ENCODE measurements at regions of chr12 and their contacts with region 1.

Region 1: DNA sequence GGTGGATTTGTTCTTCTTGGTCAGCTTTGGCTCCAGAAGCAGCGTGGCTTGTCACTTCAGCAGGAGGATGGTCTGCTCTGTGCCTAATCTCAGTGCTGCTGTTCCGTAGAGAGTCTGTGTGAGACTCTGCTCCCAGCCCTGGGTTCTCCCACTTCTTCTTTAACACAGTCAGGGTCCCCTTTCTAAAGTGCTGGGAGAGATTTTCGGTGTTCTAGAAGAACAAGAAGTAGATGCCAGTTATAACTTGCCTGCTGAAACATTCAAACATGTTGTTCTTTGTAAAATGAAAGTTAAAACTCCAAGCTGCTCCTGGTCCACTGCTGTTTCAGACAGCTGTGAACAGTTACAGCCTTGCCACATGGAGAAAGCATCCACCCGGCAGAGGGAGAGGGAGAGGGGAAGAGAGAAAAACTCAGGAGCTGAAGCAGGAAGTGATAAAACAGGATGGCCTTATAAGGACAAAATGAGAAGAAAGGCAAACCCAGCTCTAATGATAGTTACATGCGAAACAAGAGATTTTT is 55.2 kb upstream of the CERS5 start:
- DNase-seq: peak; percentile 57
- H3K4me3 ChIP-seq: peak overlapping the region; percentile 18 to 24
- H3K27ac ChIP-seq: peak overlapping the region; percentile 74 to 75
- H3K4me1 ChIP-seq: peaks cover 12% of the 10 kb centered on the region
- H3K27me3 ChIP-seq: no peaks in the 10 kb centered on the region
- CTCF ChIP-seq: peak in 3 of 4 experiments; percentile 4 to 45 (median 38)
- POLR2A ChIP-seq: peak; percentile 20

Region 2: GRCh38 chr12:50257686-50258551 is 35.6 kb after region 1 on chr12:
- intact Hi-C with region 1: loop called (anchors 5 kb)
- DNase-seq: peak; percentile 81
- H3K4me3 ChIP-seq: no peak overlapping the region
- H3K27ac ChIP-seq: peak overlapping the region; percentile 69 to 70
- H3K4me1 ChIP-seq: peaks cover 15% of the 10 kb centered on the region
- H3K27me3 ChIP-seq: no peaks in the 10 kb centered on the region
- CTCF ChIP-seq: no peak
- POLR2A ChIP-seq: no peak

Region 3: GRCh38 chr12:50314629-50315312 is 92.4 kb after region 1 on chr12:
- intact Hi-C with region 1: loop called (anchors 10 kb)
- DNase-seq: no peak
- H3K4me3 ChIP-seq: no peak overlapping the region
- H3K27ac ChIP-seq: no peak overlapping the region
- H3K4me1 ChIP-seq: no peaks in the 10 kb centered on the region
- H3K27me3 ChIP-seq: no peaks in the 10 kb centered on the region
- CTCF ChIP-seq: peak; percentile 9 to 77 (median 62)
- POLR2A ChIP-seq: no peak

Region 4: GRCh38 chr12:50400598-50401364 is 178.4 kb after region 1 on chr12 and contains the start of gene LARP4:
- intact Hi-C with region 1: loop called (anchors 5 kb)
- DNase-seq: peak; percentile 91
- H3K4me3 ChIP-seq: peak within 1 kb of the TSS; percentile 68 to 71
- H3K27ac ChIP-seq: peak within 1 kb of the TSS; percentile 88 to 94
- H3K4me1 ChIP-seq: no peaks in the 10 kb centered on the region
- H3K27me3 ChIP-seq: no peaks in the 10 kb centered on the region
- CTCF ChIP-seq: no peak
- POLR2A ChIP-seq: peak; percentile 77
- total RNA-seq, gene LARP4: 29.7 to 32.9 TPM

Measured in prostate gland (tissue), 2 donors.